ENCODE measurements at regions of chr7 and their contacts with region 1.

Region 1: GRCh38 chr7:142782922-142783900 is 12.4 kb downstream of the PRSS2 start:
- ATAC-seq: peak; percentile 76 to 97 (median 90)
- H3K4me3 ChIP-seq: peak overlapping the region in 1 of 5 donors; percentile 20
- H3K27ac ChIP-seq: no peak overlapping the region
- H3K4me1 ChIP-seq: no peaks in the 10 kb centered on the region

Region 2: DNA sequence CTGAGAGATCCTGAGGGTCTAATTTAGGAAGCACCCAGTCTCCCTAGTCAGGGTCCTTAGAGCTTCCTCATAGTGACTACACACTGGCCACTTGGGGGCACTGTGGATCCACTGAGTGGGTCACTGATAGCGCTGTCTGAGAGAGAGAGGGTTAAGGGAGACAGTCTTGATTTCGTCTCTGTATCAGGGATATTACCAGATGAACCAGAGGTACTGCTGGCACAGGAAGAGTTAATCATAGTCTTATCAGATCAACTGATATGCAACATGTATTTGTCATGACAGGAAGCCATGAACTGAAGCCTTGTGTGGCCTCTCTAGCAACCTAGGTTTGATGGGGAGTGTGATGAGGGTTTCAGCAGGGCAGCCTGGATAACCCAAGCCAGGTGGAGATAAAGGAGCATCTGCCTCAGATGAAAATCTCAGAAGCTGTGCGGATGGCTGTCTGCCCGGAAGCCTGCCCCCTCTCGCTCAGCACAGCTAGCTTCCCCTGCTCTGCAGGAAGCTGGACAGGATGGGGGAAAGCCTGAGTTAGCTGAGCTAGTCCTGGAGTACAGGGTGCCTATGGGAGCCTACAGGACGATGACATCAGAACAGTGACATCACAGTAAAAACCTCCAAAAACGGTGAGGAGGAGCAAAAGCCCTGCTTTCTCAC is 248.0 kb before region 1 on chr7:
- in situ Hi-C with region 1: loop called in 1 of 9 experiments (anchors 25 kb)
- ATAC-seq: peak; percentile 61 to 100 (median 84)
- H3K4me3 ChIP-seq: no peak overlapping the region
- H3K27ac ChIP-seq: no peak overlapping the region
- H3K4me1 ChIP-seq: no peaks in the 10 kb centered on the region

Region 3: GRCh38 chr7:142603870-142604448 is 179.3 kb before region 1 on chr7:
- in situ Hi-C with region 1: loop called in 1 of 9 experiments (anchors 25 kb)
- ATAC-seq: peak in 4 of 8 experiments; percentile 17 to 50 (median 34)
- H3K4me3 ChIP-seq: no peak overlapping the region
- H3K27ac ChIP-seq: no peak overlapping the region
- H3K4me1 ChIP-seq: no peaks in the 10 kb centered on the region

Region 4: DNA sequence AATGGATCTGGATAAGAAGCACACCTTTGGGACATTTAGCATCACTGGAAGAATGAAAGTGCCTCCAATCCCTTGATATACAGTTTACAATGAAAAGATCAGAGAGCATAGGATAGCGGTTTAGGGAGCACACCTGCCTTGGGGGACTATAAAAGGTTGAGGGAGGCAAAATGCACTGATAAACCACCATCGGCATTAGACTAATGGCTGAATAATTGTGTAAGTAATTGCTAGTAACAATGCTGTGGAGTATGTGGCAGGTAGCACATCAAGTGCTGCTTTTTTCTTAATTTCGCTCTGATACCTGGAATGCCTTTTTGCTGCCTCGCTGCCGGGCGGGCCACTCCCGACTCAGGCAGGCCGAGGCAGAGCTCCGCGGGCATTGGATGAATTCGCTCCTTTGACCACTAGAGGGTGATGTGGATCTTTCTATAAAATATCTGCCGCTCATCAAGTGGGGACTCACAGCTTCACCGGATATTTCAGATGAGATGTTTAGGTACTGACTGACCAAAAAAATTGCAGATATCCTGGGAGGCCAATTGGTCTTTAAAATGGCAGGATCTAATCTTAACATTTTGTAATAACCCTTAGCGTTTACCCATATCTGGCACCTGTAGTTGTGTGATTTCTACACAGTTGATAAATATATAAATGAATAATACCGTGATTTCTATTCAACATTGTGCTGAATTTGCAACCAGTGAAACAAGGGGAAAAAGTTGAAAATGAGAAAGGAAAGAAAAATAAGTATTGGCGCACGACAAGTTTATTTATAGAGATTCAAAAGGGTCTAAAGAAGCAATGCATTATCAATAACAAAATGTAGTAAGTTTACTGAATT is 150.7 kb before region 1 on chr7:
- in situ Hi-C with region 1: loop called in 4 of 9 experiments (anchors 25 kb)
- ATAC-seq: peak; percentile 69 to 97 (median 84)
- H3K4me3 ChIP-seq: no peak overlapping the region
- H3K27ac ChIP-seq: no peak overlapping the region
- H3K4me1 ChIP-seq: no peaks in the 10 kb centered on the region

Region 5: DNA sequence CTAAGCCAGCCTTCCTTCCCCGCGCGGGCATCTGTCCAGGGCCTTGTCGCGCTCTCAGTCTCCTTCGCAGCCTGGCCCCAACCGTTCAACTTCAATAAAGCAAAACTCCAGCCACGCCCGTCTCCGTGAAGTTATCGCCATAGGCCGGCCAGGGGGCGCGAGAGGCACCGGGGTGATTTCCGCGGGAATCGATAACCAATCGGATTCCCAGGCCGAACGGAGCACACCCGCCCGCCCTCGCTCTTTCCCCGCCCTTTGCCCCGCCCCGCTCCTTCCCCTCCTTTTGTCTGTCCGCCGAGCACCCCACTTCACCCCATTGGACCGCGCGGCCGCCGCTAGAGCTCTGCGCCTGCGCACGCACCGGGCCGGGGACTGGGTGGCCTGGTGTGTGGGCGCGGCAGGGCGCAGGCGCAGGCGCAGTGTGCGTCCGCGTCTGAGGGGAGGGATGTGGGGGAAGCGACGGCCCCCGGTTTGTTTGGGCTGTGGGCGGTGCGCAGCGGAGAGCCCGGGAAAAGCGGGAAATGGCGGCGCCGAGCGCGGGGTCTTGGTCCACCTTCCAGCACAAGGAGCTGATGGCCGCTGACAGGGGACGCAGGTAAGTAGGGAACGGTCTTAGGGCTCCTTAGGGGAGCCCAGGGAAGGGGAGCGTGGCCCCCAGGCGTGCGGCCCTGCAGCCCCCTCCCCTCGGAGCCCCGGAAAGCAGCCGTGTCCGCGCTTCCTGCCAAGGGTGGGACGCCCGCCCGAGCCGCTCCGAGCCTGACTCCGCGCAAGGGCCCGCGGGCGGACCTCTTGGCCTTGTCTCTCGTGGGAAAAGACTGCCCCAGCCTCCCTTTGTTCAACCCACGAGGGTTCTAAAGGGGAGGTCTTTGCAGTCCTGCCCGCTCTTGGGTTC is 505.0 kb after region 1 on chr7 and contains the start of gene CASP2:
- in situ Hi-C with region 1: no loop called
- ATAC-seq: peak; percentile 89 to 98 (median 96)
- H3K4me3 ChIP-seq: peak within 1 kb of the TSS; percentile 72 to 87 (median 76)
- H3K27ac ChIP-seq: peak within 1 kb of the TSS; percentile 84 to 91
- H3K4me1 ChIP-seq: peaks cover 27% of the 10 kb centered on the region in 2 donors
- total RNA-seq, gene CASP2: 10.5 to 26.0 (median 14.1) TPM